Gastrocnemius medialis (tissue), 4 donors: ENCODE measurements at regions of chr15 and their contacts with region 1.

Region 1: DNA sequence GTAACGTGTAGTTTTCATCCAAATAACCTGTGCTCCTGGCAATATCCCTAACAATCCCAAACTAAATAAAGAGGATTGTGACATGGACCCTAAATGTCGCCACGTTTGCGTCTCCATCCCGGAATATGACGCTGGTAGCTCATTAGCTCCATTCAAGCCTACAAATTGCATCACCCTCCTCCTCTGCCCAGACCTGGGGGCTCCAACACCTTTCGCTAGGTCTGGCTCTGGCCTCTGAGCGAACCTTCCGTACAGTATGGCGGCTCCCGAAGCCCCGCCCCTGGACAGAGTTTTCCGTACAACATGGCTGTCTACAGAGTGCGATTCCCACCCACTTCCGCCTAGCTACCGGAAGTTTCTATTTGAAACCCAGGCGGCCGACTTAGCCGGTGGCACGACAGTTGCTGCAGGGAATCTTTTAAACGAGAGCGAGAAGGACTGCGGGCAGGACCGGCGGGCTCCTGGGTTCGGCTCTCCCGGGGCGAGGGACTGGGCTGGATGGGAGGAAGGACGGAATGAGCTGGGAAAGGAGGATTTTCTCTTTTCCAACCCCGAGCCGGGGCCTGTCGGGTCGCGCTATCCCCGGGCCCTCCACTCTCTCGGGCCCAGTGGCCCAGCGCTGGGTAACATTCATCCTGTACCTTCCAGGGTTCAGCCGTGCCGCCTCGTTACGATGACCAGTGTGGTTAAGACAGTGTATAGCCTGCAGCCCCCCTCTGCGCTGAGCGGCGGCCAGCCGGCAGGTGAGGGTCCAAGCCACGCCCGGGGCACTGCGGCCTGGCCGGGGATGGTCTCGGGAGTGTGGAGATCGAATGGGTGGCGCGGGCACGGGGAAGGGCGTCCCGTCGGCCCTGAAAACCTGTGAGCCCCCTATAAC is at the start of gene KNSTRN:
- DNase-seq: peak; percentile 88 to 91
- ATAC-seq: peak; percentile 87 to 88
- H3K4me3 ChIP-seq: peak within 1 kb of the TSS; percentile 75 to 94 (median 80)
- H3K27ac ChIP-seq: peak within 1 kb of the TSS; percentile 62 to 76 (median 74)
- H3K4me1 ChIP-seq: peaks cover 11 to 20% of the 10 kb centered on the region in 2 donors
- H3K27me3 ChIP-seq: no peaks in the 10 kb centered on the region
- CTCF ChIP-seq: no peak
- POLR2A ChIP-seq: peak; percentile 29 to 39
- total RNA-seq, gene KNSTRN: 10.8 to 30.9 (median 22.1) TPM

Region 2: GRCh38 chr15:38453971-38454695 is 1928.7 kb before region 1 on chr15 and contains the start of gene FAM98B:
- in situ Hi-C with region 1: no loop called
- intact Hi-C with region 1: loop called (anchors 5 kb)
- DNase-seq: peak; percentile 73 to 84
- ATAC-seq: peak; percentile 94 to 96
- H3K4me3 ChIP-seq: peak within 1 kb of the TSS; percentile 89 to 96 (median 91)
- H3K27ac ChIP-seq: peak within 1 kb of the TSS; percentile 91 to 96 (median 91)
- H3K4me1 ChIP-seq: peaks cover 12 to 18% of the 10 kb centered on the region in 2 donors
- H3K27me3 ChIP-seq: no peaks in the 10 kb centered on the region
- CTCF ChIP-seq: peak in 3 of 5 experiments; percentile 17 to 48 (median 32)
- POLR2A ChIP-seq: peak in 1 of 2 donors; percentile 47
- total RNA-seq, gene FAM98B: 3.9 to 8.6 (median 6.1) TPM

Region 3: GRCh38 chr15:40344631-40345120 is 38.1 kb before region 1 on chr15:
- in situ Hi-C with region 1: no loop called
- intact Hi-C with region 1: loop called (anchors 5 kb)
- DNase-seq: peak in 1 of 2 donors; percentile 53
- ATAC-seq: no peak
- H3K4me3 ChIP-seq: no peak overlapping the region
- H3K27ac ChIP-seq: no peak overlapping the region
- H3K4me1 ChIP-seq: peaks cover 19 to 25% of the 10 kb centered on the region in 2 donors
- H3K27me3 ChIP-seq: no peaks in the 10 kb centered on the region
- CTCF ChIP-seq: peak; percentile 61 to 85 (median 75)
- POLR2A ChIP-seq: no peak

Region 4: GRCh38 chr15:40405501-40406381 is 22.9 kb after region 1 on chr15 and contains the start of gene IVD:
- in situ Hi-C with region 1: no loop called
- intact Hi-C with region 1: loop called (anchors 1 kb)
- DNase-seq: peak; percentile 90 to 94
- ATAC-seq: peak; percentile 93 to 97
- H3K4me3 ChIP-seq: peak within 1 kb of the TSS; percentile 64 to 87 (median 73)
- H3K27ac ChIP-seq: peak within 1 kb of the TSS; percentile 74 to 81 (median 75)
- H3K4me1 ChIP-seq: peaks cover 8 to 11% of the 10 kb centered on the region in 2 donors
- H3K27me3 ChIP-seq: no peaks in the 10 kb centered on the region
- CTCF ChIP-seq: no peak
- POLR2A ChIP-seq: peak; percentile 41 to 45
- total RNA-seq, gene IVD: 27.4 to 34.1 (median 29.1) TPM

Region 5: GRCh38 chr15:40430271-40430805 is 47.5 kb after region 1 on chr15:
- in situ Hi-C with region 1: no loop called
- intact Hi-C with region 1: no loop called
- DNase-seq: no peak
- ATAC-seq: no peak
- H3K4me3 ChIP-seq: no peak overlapping the region
- H3K27ac ChIP-seq: no peak overlapping the region
- H3K4me1 ChIP-seq: no peaks in the 10 kb centered on the region
- H3K27me3 ChIP-seq: no peaks in the 10 kb centered on the region
- CTCF ChIP-seq: no peak
- POLR2A ChIP-seq: no peak

Region 6: DNA sequence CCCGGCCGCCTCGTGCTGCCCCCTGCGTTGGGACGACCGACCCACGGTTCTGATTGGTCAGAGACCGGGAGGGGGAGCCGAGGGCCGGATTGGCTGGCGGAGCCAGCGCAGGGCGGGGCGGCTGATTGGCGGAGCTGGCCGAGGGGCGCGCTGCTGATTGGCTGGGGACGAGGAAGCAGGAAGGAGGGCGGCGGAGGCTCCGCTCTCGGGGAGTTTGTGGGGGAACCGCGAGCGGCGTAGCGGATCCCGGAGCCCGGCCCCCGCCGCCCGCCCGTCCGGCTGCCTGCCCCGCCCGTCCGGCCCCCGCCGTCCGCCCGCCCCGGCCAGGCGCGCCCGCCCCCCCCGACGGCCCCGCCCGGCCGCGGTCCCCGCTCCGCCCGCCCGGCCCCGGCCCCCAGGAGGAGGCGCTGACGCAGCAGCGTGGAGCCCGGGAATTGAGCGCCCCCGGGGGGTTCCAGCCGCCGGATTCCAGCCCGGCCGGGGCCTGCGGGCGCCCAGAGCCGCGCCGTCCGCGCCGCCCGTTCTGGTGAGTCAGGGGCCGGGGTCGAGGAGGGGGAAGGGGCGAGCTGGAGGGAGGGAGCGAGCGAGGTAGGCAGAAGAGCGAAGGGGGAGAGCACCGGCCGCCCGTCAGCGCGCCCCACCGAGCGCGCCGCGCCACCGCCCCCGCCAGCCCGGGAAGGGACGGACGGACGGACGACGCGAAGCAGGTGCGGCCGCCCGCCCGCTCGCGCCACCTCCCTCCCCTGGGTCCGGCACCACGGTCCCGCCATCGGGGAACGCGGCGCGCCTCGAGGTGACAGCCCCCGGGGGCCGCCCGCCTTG is 58.1 kb after region 1 on chr15 and contains the start of gene BAHD1:
- in situ Hi-C with region 1: no loop called
- intact Hi-C with region 1: loop called (anchors 2 kb)
- DNase-seq: peak; percentile 95 to 96
- ATAC-seq: peak; percentile 83 to 86
- H3K4me3 ChIP-seq: peak within 1 kb of the TSS; percentile 74 to 98 (median 81)
- H3K27ac ChIP-seq: peak within 1 kb of the TSS; percentile 76 to 86 (median 82)
- H3K4me1 ChIP-seq: peaks cover 14 to 20% of the 10 kb centered on the region in 2 donors
- H3K27me3 ChIP-seq: peaks cover 14 to 23% (median 18%) of the 10 kb centered on the region in 3 donors
- CTCF ChIP-seq: peak in 1 of 5 experiments; percentile 13
- POLR2A ChIP-seq: peak; percentile 46 to 47
- total RNA-seq, gene BAHD1: 8.8 to 27.4 (median 13.5) TPM